ENCODE measurements at regions of chr1 and their contacts with region 1.

Region 1: DNA sequence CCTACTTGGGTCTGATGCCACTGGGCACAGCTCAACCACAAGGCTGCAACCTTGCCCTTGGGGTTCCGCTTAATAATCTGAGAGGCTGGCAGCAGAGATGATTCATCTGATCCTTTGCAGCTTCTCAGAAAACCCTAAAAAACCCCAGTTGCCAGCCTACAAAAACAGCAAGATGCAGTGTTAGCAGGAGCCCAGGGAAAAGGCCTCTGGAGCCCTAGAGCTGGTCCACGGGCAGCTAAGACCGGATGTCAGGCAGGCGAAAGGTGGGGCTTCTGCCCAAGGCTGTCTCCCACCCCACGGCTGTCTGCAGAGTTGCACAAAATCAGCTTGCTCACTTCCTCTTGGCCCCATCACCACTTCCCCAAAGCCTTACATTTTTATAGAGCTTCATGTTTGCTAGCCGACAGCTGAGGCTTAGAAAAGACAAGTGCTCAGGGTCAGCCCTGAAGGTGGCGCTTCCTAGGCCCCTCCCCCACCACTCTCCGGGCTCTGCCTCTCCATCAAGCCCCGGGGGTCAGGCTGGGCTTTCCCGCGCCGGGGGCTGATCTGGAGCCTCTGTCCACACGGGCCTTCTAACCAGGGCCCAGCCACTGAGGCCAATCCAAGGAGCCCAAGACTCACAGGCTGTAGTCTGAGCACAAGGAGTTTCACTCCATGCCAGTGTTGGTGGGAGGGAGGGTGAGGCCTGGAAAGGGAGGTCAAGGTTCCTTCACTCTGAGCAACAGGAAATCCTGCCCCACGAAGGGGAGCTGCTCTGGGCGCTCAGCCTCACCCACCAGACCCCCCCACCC is 4.2 kb upstream of the ADORA3 start:
- DNase-seq: peak; percentile 77
- H3K4me3 Mint-ChIP-seq: peak overlapping the region; percentile 53
- H3K27ac Mint-ChIP-seq: peak overlapping the region; percentile 92
- H3K4me1 Mint-ChIP-seq: peaks cover 49% of the 10 kb centered on the region
- H3K27me3 Mint-ChIP-seq: no peaks in the 10 kb centered on the region

Region 2: GRCh38 chr1:111139956-111140679 is 367.5 kb before region 1 on chr1 and contains the starts of genes CEPT1 and DRAM2:
- CTCF ChIA-PET with region 1: no interaction called
- intact Hi-C with region 1: no loop called
- DNase-seq: peak; percentile 98
- H3K4me3 Mint-ChIP-seq: peak within 1 kb of the TSS; percentile 94
- H3K27ac Mint-ChIP-seq: peak within 1 kb of the TSS; percentile 91
- H3K4me1 Mint-ChIP-seq: peaks cover 49% of the 10 kb centered on the region
- H3K27me3 Mint-ChIP-seq: no peaks in the 10 kb centered on the region
- total RNA-seq, gene CEPT1: 29.0 to 30.3 TPM
- total RNA-seq, gene DRAM2: 27.7 to 31.1 TPM

Region 3: DNA sequence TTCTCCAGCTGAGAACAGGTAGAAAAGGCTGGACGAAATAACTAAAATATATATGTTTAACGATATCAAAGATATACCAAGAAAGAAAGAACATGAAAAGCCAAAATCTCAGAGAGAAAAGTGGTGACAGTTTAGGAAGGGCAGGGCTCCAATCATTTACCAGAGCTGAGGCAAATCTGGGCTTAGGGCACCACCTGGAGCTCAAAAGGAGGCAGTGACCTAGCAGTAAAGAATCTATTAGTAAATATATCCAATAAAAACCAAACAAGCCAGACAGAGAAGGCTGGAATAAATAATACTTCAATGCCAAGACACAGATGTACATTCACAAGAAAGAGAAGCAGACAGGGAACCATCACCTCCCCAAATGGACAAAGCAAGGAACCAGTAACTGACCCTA is 173.4 kb before region 1 on chr1:
- CTCF ChIA-PET with region 1: no interaction called
- intact Hi-C with region 1: no loop called
- DNase-seq: peak; percentile 76
- H3K4me3 Mint-ChIP-seq: no peak overlapping the region
- H3K27ac Mint-ChIP-seq: no peak overlapping the region
- H3K4me1 Mint-ChIP-seq: no peaks in the 10 kb centered on the region
- H3K27me3 Mint-ChIP-seq: no peaks in the 10 kb centered on the region

Region 4: GRCh38 chr1:111471012-111471411 is 36.6 kb before region 1 on chr1:
- CTCF ChIA-PET with region 1: interaction called, 27 read pairs
- intact Hi-C with region 1: loop called (anchors 1 kb)
- DNase-seq: peak; percentile 88
- H3K4me3 Mint-ChIP-seq: no peak overlapping the region
- H3K27ac Mint-ChIP-seq: no peak overlapping the region
- H3K4me1 Mint-ChIP-seq: peaks cover 24% of the 10 kb centered on the region
- H3K27me3 Mint-ChIP-seq: no peaks in the 10 kb centered on the region

Region 5: DNA sequence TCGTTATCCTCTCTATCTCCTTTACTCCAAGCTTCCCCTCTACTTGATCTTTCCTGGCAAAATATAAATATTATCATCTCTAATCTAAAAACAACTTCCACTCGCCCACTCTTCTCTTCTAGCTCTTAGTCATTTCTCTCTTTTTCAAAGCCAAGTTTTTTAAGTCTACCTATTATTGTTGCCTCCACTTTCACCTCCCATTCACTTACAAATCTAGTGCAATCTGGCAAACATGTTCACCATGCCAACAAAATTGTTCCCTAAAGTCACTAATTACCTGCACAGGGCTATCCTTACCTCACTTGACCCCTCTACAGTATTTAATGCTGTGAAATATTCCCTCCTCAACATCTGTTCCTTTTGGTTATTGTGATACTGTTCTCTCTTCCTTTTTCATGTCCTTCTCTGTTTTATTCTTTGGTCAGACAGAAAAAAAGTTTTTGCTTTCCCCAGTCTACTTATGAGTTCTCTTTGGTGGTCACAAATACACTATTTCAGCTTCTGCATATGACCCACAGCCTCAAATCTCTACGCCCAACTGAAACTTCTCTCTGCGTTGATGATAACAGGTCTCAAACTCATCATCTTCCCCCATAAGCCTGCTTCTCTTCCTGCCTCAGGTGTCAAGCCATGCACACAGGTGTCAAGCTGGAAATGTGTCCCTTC is 80.0 kb after region 1 on chr1:
- CTCF ChIA-PET with region 1: interaction called, 18 read pairs
- intact Hi-C with region 1: no loop called
- DNase-seq: no peak
- H3K4me3 Mint-ChIP-seq: no peak overlapping the region
- H3K27ac Mint-ChIP-seq: no peak overlapping the region
- H3K4me1 Mint-ChIP-seq: peaks cover 15% of the 10 kb centered on the region
- H3K27me3 Mint-ChIP-seq: no peaks in the 10 kb centered on the region

Region 6: DNA sequence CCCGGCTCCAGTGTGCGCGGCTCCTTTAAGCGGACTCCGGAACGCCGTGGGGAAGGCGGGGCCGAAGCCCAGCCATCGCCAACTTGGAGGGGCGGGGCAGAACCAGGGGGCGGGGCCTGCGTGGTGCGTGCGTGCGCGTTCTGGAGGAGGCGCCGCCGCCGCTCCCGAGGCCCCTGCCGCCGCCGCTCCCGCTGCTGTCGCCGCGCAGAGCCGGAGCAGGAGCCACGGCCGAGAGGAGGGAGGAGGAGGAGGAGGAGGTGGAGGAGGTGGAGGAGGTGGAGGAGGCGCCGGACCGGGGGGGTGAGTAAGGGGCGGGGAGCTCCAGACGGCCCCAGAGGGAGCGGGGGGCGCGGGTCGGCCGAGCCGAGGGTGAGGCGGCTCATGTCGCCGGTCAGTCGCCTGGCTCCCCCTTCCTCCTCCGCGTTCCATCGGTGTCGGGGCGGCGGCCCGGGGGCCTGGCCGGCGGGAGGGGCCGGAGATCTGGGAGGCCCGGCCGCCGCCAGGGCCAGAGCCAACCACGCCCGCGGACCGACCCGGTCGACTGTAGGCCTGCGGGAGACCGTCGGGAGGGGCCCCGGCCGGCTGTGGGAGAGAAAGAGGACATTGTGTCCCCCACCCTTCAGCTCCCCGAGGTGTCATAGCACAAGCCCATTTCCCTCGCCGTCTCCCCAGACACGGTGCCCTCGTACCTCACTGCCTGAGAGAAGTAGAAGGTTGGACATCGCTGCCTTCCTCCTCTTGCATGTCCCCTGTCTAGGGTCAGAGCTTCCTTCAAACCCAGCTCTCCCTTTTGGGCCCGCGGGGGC is 112.2 kb after region 1 on chr1 and contains the start of gene RAP1A:
- CTCF ChIA-PET with region 1: interaction called, 20 read pairs
- intact Hi-C with region 1: loop called (anchors 1 kb)
- DNase-seq: peak; percentile 97
- H3K4me3 Mint-ChIP-seq: peak within 1 kb of the TSS; percentile 93
- H3K27ac Mint-ChIP-seq: peak within 1 kb of the TSS; percentile 96
- H3K4me1 Mint-ChIP-seq: peaks cover 68% of the 10 kb centered on the region
- H3K27me3 Mint-ChIP-seq: no peaks in the 10 kb centered on the region
- total RNA-seq, gene RAP1A: 152 to 155 TPM

Region 7: GRCh38 chr1:111656086-111657017 is 148.7 kb after region 1 on chr1:
- CTCF ChIA-PET with region 1: interaction called, 17 read pairs
- intact Hi-C with region 1: loop called (anchors 2 kb)
- DNase-seq: peak; percentile 23
- H3K4me3 Mint-ChIP-seq: no peak overlapping the region
- H3K27ac Mint-ChIP-seq: no peak overlapping the region
- H3K4me1 Mint-ChIP-seq: peaks cover 40% of the 10 kb centered on the region
- H3K27me3 Mint-ChIP-seq: no peaks in the 10 kb centered on the region

Region 8: DNA sequence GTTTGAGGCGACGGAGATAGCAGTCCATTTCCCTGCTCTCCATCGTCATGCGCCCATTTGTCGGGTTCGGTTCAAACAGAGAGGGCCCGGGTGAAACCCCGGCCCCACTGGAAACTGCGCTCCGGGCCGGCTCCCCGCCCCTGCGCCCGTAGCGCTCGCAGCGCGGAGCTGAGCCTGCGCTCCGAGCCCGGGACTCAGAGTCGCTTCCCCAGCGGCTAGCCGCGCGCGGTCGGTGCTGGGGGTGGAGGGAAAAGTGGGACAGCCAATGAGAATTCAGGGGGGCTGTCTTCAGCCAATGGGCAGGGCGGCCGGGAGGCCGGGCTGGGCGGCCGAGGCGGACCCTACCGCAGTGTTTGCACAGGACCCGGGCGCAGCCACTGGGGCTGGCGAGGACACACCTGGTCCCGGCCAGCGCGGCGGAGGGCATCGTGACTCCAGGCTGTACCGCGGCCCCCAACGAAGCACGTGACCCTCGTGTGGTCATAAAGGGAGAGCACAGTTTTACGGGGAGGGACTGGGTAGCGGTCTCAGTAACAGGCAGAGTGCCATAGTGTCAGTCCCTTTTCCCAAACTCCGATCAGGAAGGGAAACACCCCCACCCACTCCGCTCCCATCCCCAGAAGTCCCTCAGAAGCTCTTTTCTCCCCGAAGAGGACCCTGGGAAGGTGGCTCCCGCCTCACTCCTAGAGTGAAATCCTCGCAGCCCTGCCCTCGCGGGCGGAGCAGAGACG is 231.8 kb after region 1 on chr1 and contains the start of gene INKA2:
- CTCF ChIA-PET with region 1: interaction called, 15 read pairs
- intact Hi-C with region 1: loop called (anchors 1 kb)
- DNase-seq: peak; percentile 82
- H3K4me3 Mint-ChIP-seq: peak within 1 kb of the TSS; percentile 87
- H3K27ac Mint-ChIP-seq: peak within 1 kb of the TSS; percentile 60
- H3K4me1 Mint-ChIP-seq: peaks cover 16% of the 10 kb centered on the region
- H3K27me3 Mint-ChIP-seq: peaks cover 35% of the 10 kb centered on the region
- total RNA-seq, gene INKA2: 1.9 to 3.2 TPM

Region 9: DNA sequence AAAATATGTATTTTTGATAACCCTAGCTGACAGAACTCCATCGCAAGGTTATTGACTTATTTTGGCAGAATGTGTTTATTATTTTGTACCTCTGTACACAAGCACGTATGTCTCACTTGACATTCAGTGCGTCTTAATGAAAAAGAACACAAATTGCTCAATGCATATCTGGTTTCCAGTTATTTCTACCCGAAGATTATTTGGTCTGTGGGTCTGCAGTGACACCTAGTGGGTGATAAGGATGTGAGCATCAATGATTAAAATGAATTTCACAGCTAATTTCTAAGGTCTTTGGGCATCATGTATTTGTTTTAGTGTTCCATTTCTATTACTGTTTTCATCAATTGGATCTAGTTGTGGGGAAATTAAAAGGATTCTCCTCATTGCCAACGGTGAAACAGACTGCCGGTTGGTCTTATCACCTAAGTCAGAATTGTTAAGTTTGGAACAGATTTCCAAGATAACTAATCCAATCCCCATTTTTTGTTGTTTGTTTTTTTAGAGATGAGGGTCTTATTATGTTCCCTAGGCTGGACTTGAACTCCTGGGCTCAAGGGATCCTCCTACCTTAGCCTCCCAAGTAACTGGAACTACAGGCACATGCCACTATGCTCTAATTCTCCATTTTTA is 262.0 kb after region 1 on chr1:
- CTCF ChIA-PET with region 1: interaction called, 36 read pairs
- intact Hi-C with region 1: loop called (anchors 1 kb)
- DNase-seq: peak; percentile 67
- H3K4me3 Mint-ChIP-seq: no peak overlapping the region
- H3K27ac Mint-ChIP-seq: no peak overlapping the region
- H3K4me1 Mint-ChIP-seq: peaks cover 12% of the 10 kb centered on the region
- H3K27me3 Mint-ChIP-seq: no peaks in the 10 kb centered on the region

Measured in activated naive CD4-positive, alpha-beta T cell treated with anti-CD3 and anti-CD28 coated beads for 36 hours (primary cell).